Aorta (tissue), 5 donors: ENCODE measurements at regions of chr17 and their contacts with region 1.

Region 1: GRCh38 chr17:62968445-62968923 is 2.4 kb downstream of the TANC2 start:
- DNase-seq: no peak
- ATAC-seq: peak; percentile 76
- H3K4me3 ChIP-seq: no peak overlapping the region
- H3K27ac ChIP-seq: no peak overlapping the region
- H3K4me1 ChIP-seq: no peaks in the 10 kb centered on the region
- H3K27me3 ChIP-seq: no peaks in the 10 kb centered on the region

Region 2: GRCh38 chr17:62819475-62820212 is 148.8 kb before region 1 on chr17:
- intact Hi-C with region 1: loop called in 1 of 2 experiments (anchors 5 kb)
- DNase-seq: peak; percentile 83 to 85
- ATAC-seq: peak; percentile 93
- H3K4me3 ChIP-seq: no peak overlapping the region
- H3K27ac ChIP-seq: peak overlapping the region; percentile 73 to 84
- H3K4me1 ChIP-seq: peaks cover 0 to 14% of the 10 kb centered on the region in 2 donors
- H3K27me3 ChIP-seq: no peaks in the 10 kb centered on the region

Region 3: GRCh38 chr17:62860907-62861848 is 107.3 kb before region 1 on chr17:
- intact Hi-C with region 1: loop called in 1 of 2 experiments (anchors 10 kb)
- DNase-seq: no peak
- ATAC-seq: no peak
- H3K4me3 ChIP-seq: no peak overlapping the region
- H3K27ac ChIP-seq: no peak overlapping the region
- H3K4me1 ChIP-seq: no peaks in the 10 kb centered on the region
- H3K27me3 ChIP-seq: no peaks in the 10 kb centered on the region

Region 4: GRCh38 chr17:62892870-62893338 is 75.6 kb before region 1 on chr17:
- intact Hi-C with region 1: loop called in 1 of 2 experiments (anchors 10 kb)
- DNase-seq: peak in 1 of 2 donors; percentile 57
- ATAC-seq: no peak
- H3K4me3 ChIP-seq: no peak overlapping the region
- H3K27ac ChIP-seq: no peak overlapping the region
- H3K4me1 ChIP-seq: peaks cover 0 to 9% of the 10 kb centered on the region in 2 donors
- H3K27me3 ChIP-seq: no peaks in the 10 kb centered on the region

Region 5: DNA sequence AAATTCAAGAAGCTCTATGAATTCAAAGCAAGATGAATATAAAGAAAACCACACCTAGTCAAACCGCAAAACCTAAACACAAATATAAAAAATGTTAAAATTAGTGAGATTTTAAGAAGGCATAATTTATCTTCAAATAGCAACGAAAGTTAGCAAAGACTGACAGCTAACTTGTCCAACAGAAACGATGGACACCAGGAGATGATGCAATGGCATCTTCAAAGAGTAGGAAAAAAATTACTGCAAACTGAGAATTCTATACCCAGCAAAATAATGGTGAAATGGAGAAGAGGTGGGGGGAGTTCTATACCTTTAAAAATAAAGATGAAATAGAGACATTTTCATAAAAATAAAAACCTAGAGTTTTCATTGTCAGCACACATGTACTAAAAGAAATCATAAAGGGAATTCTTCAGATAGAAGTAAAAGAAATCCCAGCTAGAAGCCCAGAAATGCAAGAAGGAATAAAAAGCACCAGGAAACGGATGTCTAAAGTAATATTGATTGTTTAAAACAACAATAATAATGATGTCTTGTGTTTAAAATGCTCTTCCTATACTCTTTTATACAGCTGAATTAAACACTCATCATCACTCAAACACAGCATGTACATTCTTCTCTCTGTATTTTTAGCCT is 27.0 kb before region 1 on chr17:
- intact Hi-C with region 1: no loop called
- DNase-seq: no peak
- ATAC-seq: no peak
- H3K4me3 ChIP-seq: no peak overlapping the region
- H3K27ac ChIP-seq: no peak overlapping the region
- H3K4me1 ChIP-seq: no peaks in the 10 kb centered on the region
- H3K27me3 ChIP-seq: no peaks in the 10 kb centered on the region